IMR-90 (cell line): ENCODE measurements at regions of chr2 and their contacts with region 1.

Region 1: DNA sequence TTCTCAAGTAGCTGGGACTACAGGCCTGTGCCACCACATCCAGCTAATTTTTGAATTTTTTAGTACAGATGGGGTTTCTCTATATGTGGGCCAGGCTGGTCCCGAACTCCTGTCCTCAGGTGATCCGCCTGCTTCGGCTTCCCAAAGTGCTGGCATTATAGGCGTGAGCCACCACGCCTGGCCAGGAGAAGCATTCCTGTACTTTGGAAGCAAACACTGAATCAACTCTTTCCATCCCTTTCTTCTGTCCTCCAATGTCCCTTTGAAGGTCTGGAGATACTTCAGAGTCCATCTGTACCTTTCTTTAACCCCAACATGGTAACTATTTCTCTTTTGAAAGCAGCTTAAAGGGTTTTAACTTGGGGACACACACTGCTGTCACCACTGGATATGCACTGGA is 23.6 kb upstream of the MAP4K4 start:
- DNase-seq: no peak
- ATAC-seq: no peak
- H3K4me3 ChIP-seq: no peak overlapping the region
- H3K27ac ChIP-seq: no peak overlapping the region
- H3K4me1 ChIP-seq: no peaks in the 10 kb centered on the region; the same call in 1 of the 2 replicates
- H3K27me3 ChIP-seq: no peaks in the 10 kb centered on the region; the same call in 1 of the 2 replicates
- CTCF ChIP-seq: no peak
- POLR2A ChIP-seq: no peak
- RAD21 ChIP-seq: no peak

Region 2: DNA sequence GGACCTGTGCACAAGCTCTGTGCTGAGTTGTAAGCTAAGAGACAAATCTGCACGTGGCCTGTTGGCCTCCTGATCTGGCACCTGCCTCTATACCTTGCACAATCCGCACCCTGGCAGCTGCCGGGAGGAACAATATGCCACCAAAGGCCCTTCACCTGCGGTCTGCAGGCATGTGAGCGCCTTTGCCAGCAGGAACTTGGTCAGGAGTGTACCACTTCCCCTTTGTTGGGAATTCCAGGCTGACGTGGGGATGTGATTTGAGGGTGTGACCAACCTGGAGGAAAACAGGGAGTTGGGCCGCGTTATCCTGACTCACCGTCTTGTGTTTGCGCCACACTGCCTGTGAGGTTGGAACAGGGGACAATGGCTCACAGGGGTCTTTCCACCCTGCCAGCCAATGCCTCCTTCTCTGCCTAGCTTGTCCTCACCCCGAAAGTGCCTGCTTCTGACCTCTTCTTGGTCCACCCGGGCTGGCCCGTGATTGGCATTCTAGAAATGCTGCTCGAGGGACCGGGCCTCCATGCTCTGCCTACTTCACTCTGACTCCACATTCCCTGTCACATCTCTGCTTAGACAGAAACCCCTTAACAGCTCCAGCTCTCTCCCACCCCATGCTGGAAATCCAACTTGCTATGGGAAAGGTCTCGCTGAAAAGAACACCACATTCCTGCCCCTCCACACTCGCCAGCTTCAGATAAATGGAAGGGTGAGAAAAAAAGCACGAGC is 43.5 kb before region 1 on chr2:
- CTCF ChIA-PET with region 1: no interaction called
- POLR2A ChIA-PET with region 1: no interaction called
- dilution Hi-C with region 1: no loop called
- in situ Hi-C with region 1: no loop called
- intact Hi-C with region 1: loop called (anchors 5 kb)
- DNase-seq: no peak
- ATAC-seq: no peak
- H3K4me3 ChIP-seq: no peak overlapping the region
- H3K27ac ChIP-seq: no peak overlapping the region
- H3K4me1 ChIP-seq: peaks cover 2% of the 10 kb centered on the region
- H3K27me3 ChIP-seq: no peaks in the 10 kb centered on the region
- CTCF ChIP-seq: no peak
- POLR2A ChIP-seq: no peak
- RAD21 ChIP-seq: no peak

Region 3: DNA sequence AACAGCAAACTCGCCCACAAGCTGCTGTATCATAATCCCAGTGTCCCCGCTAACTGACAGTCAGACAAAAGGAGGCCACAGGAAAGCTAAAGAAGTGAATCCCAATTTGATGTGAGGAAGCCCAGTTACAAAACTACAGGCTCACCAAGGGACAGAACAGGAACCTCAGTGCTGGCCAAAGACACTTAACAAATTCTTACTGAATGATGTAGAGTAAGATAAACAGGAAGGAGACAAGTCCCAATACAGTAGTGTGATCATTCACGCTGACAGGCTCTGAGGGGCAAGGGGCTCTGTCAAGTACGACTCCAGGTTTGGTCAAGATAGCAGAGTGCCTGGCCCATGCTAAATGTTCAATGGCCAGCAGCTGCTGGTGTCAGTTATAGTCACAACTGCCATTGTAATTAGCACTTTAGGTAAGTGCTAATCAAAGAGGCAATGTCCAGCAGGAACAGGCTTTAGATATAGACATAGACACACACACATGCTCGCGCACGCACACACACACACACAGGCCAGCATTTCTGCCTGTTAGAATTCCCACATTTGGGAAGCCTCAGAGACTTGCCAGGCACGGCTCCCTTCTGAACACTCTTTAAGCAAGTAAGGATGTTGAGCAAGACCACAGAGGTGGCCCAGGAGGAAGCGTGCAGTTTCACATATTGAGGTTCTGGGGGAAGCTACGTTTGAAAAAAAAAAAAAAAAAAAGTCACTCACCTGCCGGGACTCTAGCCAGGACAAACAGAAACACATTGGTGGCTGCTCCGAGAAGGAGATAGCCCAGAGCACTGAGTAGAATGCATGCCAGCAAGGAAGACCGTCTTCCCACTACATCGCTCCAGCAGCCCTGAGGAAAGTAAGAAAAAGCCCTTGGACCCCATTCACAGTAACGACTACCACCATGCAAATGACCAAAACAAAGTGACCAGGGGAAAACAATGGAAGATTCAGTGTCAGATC is 1052.5 kb after region 1 on chr2:
- CTCF ChIA-PET with region 1: no interaction called
- POLR2A ChIA-PET with region 1: no interaction called
- dilution Hi-C with region 1: no loop called
- in situ Hi-C with region 1: no loop called
- intact Hi-C with region 1: no loop called
- DNase-seq: no peak
- ATAC-seq: no peak
- H3K4me3 ChIP-seq: no peak overlapping the region
- H3K27ac ChIP-seq: no peak overlapping the region
- H3K4me1 ChIP-seq: peaks cover 3% of the 10 kb centered on the region; the same call in 1 of the 2 replicates
- H3K27me3 ChIP-seq: no peaks in the 10 kb centered on the region
- CTCF ChIP-seq: no peak
- POLR2A ChIP-seq: no peak
- RAD21 ChIP-seq: no peak